GM10248 (cell line): ENCODE measurements at regions of chr6 and their contacts with region 1.

Region 1: GRCh38 chr6:109455502-109456282 is at the start of gene MICAL1:
- DNase-seq: peak; percentile 83
- CTCF ChIP-seq: peak; percentile 13

Region 2: DNA sequence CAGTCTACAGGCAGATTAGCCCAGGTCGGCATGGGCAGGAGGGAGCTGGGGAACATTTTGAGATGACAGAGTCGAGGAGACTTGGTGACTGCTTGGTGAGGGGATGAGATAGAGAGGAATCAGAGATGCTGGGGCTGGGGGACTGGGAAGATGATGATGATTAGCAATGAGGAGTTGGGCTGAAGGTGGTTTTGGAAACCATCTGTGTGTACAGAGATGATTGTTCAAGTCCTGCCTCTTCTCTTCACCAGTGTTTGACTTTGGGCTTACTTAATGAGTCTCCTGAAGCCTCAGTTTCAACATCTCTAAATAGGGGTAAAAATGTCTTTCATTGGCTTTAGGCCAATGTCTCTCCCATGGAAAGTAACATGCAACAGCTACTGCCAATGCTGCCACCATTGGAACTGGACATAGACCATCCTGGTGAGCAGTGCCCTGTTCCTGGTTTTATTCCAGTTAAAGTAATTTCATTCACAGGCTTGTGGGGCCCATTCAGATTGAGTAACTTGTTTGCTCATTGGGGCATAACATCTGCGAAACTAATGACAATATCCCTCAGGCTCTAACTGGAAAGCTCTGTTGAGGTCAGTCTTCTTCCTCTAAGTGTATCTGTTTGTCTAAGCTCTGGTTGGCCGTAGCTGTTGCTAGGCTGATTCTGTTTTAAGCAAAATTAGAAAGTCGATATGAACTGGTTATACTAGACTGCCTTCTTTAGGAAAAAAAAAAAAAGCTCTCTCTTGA is 508.4 kb before region 1 on chr6:
- CTCF ChIA-PET with region 1: no interaction called
- POLR2A ChIA-PET with region 1: no interaction called
- DNase-seq: no peak
- CTCF ChIP-seq: no peak

Region 3: GRCh38 chr6:109440331-109441068 is 15.2 kb before region 1 on chr6 and contains the starts of genes PPIL6 and SMPD2:
- CTCF ChIA-PET with region 1: interaction called, 19 read pairs
- POLR2A ChIA-PET with region 1: interaction called, 4 read pairs
- DNase-seq: peak; percentile 95
- CTCF ChIP-seq: peak; percentile 15

Region 4: DNA sequence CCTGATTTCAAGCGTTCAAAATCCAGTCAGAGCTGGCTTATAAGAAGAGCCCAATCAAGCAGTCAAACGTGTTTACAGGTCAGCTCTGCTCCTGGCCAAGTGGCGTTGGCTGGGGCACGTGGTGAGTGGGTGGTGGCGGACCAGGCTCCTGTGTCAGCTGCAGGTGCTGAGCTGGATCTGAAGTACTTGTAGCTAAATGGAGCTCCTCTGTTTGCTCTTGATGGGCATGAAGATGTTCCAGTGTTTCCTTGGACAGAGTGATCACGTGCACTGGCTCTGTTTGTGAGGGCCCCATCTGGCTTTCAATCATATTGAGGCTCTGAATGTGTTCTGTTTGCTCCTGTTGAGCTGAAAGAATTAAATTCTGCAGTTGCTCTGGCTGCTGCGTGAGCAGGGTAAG is 10.1 kb after region 1 on chr6:
- CTCF ChIA-PET with region 1: interaction called, 45 read pairs
- POLR2A ChIA-PET with region 1: interaction called, 6 read pairs
- DNase-seq: no peak
- CTCF ChIP-seq: no peak

Region 5: DNA sequence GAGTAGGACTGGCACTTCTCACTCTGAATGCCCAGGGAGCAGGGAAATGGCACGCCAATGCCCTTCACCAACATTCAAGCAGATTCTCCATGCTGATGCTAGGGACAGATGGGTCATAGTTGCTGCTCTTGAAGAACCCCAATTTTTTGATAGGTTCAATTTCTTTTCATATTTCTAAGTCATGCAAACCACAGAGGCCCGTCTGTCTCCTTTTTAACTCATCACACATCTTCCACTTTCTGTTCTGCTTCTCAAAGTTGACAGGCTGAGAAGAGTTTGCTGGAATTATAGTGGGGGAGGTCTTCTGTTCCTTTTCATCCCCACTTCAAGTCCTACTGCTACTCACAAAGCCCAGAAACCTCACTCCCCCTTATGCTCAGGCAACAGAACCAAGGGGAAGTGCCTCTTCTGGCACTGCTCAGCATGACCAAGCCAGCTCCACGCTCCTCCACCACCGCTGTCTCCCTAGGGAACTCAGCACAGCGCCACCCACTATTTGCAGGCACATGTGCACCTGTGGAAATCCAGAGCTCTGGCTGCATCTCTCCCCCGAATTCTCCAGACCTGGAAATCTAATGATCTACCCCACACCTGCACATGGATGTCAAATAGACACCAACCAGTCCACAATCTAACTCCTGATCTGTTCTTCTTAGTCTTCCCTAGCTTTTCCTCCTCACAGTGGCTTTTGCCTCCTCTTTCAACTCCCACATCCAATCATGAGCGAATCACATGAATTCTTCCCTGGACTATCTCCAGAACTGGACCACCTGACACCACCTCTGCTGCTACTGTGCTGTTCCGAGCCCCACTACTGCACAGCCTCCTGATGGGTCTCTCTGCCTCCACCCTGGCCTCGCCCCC is 16.7 kb after region 1 on chr6:
- CTCF ChIA-PET with region 1: interaction called, 45 read pairs
- POLR2A ChIA-PET with region 1: interaction called, 6 read pairs
- DNase-seq: peak; percentile 32
- CTCF ChIP-seq: peak; percentile 26